Activated naive CD8-positive, alpha-beta T cell treated with anti-CD3 and anti-CD28 coated beads, Interleukin-2, amount 10 ng/mL, durations not matched to agents 7 days and 5 days (primary cell): ENCODE measurements at regions of chr19 and their contacts with region 1.

Region 1: GRCh38 chr19:37906869-37907734 is at the start of gene SIPA1L3:
- DNase-seq: peak; percentile 92
- ATAC-seq: peak; percentile 99
- H3K4me3 Mint-ChIP-seq: peak within 1 kb of the TSS; percentile 81
- H3K27ac Mint-ChIP-seq: peak within 1 kb of the TSS; percentile 81
- H3K4me1 Mint-ChIP-seq: peaks cover 21% of the 10 kb centered on the region
- H3K27me3 Mint-ChIP-seq: no peaks in the 10 kb centered on the region
- total RNA-seq, gene SIPA1L3: 20.3 to 24.6 TPM

Region 2: DNA sequence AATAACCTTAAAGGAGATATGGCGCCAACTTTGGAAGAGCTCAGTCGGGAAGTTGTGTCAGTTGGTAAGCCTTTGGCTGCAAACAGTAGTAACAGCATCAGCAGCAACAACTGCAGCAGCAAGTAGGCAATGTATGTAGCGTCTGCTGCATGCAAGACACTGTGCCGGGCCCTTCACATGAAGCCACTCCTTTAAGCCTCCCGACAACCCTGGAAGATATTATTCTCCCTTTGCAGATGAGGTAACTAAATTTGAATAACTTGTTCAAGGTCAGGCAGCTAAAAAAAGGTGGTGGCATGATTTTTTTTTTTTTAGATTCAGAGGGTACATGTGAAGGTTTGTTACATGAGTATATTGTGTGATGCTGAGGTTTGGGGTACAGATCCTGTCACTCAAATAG is 19.6 kb after region 1 on chr19:
- POLR2A ChIA-PET with region 1: no interaction called
- DNase-seq: no peak
- ATAC-seq: no peak
- H3K4me3 Mint-ChIP-seq: no peak overlapping the region
- H3K27ac Mint-ChIP-seq: no peak overlapping the region
- H3K4me1 Mint-ChIP-seq: peaks cover 2% of the 10 kb centered on the region
- H3K27me3 Mint-ChIP-seq: no peaks in the 10 kb centered on the region

Region 3: GRCh38 chr19:38020311-38020710 is 113.2 kb after region 1 on chr19:
- POLR2A ChIA-PET with region 1: no interaction called
- DNase-seq: no peak
- ATAC-seq: no peak
- H3K4me3 Mint-ChIP-seq: no peak overlapping the region
- H3K27ac Mint-ChIP-seq: no peak overlapping the region
- H3K4me1 Mint-ChIP-seq: peaks cover 2% of the 10 kb centered on the region
- H3K27me3 Mint-ChIP-seq: no peaks in the 10 kb centered on the region

Region 4: GRCh38 chr19:38049105-38049649 is 142.1 kb after region 1 on chr19:
- POLR2A ChIA-PET with region 1: interaction called, 35 read pairs
- DNase-seq: peak; percentile 62
- ATAC-seq: peak; percentile 90
- H3K4me3 Mint-ChIP-seq: peak overlapping the region; percentile 85
- H3K27ac Mint-ChIP-seq: peak overlapping the region; percentile 94
- H3K4me1 Mint-ChIP-seq: peaks cover 29% of the 10 kb centered on the region
- H3K27me3 Mint-ChIP-seq: no peaks in the 10 kb centered on the region